AG04450 (cell line): ENCODE measurements at regions of chr5 and their contacts with region 1.

Region 1: GRCh38 chr5:75566710-75567309 is 44.4 kb upstream of the ANKDD1B start:
- DNase-seq: peak; percentile 75
- H3K4me3 ChIP-seq: no peak overlapping the region
- H3K27ac ChIP-seq: peak overlapping the region; percentile 63
- H3K27me3 ChIP-seq: no peaks in the 10 kb centered on the region
- CTCF ChIP-seq: no peak

Region 2: GRCh38 chr5:75511435-75512384 is 55.1 kb before region 1 on chr5 and contains the starts of genes CERT1 and POLK:
- CTCF ChIA-PET with region 1: no interaction called
- POLR2A ChIA-PET with region 1: interaction called, 12 read pairs
- DNase-seq: peak; percentile 95
- H3K4me3 ChIP-seq: peak within 1 kb of the TSS; percentile 88
- H3K27ac ChIP-seq: peak within 1 kb of the TSS; percentile 76
- H3K27me3 ChIP-seq: no peaks in the 10 kb centered on the region
- CTCF ChIP-seq: no peak
- polyA plus RNA-seq, gene CERT1: 17.1 and 18.1 TPM in 2 replicates
- polyA plus RNA-seq, gene POLK: 20.8 and 30.9 TPM in 2 replicates